Natural killer cell (primary cell): ENCODE measurements at regions of chr6 and their contacts with region 1.

Region 1: GRCh38 chr6:111715321-111715720 is 109.6 kb upstream of the TRAF3IP2 start:
- DNase-seq: peak in 1 of 2 donors; percentile 75
- ATAC-seq: peak in 2 of 3 donors; percentile 19 to 25
- H3K4me3 ChIP-seq: no peak overlapping the region
- H3K4me3 Mint-ChIP-seq: peak overlapping the region; percentile 79
- H3K27ac ChIP-seq: peak overlapping the region; percentile 82
- H3K27ac Mint-ChIP-seq: peak overlapping the region; percentile 98 to 100
- H3K4me1 ChIP-seq: peaks cover 44% of the 10 kb centered on the region
- H3K4me1 Mint-ChIP-seq: peaks cover 74 to 76% of the 10 kb centered on the region in 2 donors
- H3K27me3 ChIP-seq: no peaks in the 10 kb centered on the region
- H3K27me3 Mint-ChIP-seq: no peaks in the 10 kb centered on the region
- CTCF ChIP-seq: no peak

Region 2: GRCh38 chr6:111731456-111732195 is 16.3 kb after region 1 on chr6:
- intact Hi-C with region 1: loop called (anchors 1 kb)
- DNase-seq: peak; percentile 48 to 55
- ATAC-seq: peak; percentile 63 to 82 (median 74)
- H3K4me3 ChIP-seq: no peak overlapping the region
- H3K4me3 Mint-ChIP-seq: peak overlapping the region; percentile 62
- H3K27ac ChIP-seq: peak overlapping the region; percentile 84
- H3K27ac Mint-ChIP-seq: peak overlapping the region; percentile 90 to 100
- H3K4me1 ChIP-seq: peaks cover 77% of the 10 kb centered on the region
- H3K4me1 Mint-ChIP-seq: peaks cover 93 to 96% of the 10 kb centered on the region in 2 donors
- H3K27me3 ChIP-seq: no peaks in the 10 kb centered on the region
- H3K27me3 Mint-ChIP-seq: no peaks in the 10 kb centered on the region
- CTCF ChIP-seq: no peak

Region 3: GRCh38 chr6:111750753-111751684 is 35.7 kb after region 1 on chr6:
- intact Hi-C with region 1: loop called (anchors 2 kb)
- DNase-seq: peak; percentile 53 to 92
- ATAC-seq: peak; percentile 70 to 83 (median 80)
- H3K4me3 ChIP-seq: no peak overlapping the region
- H3K4me3 Mint-ChIP-seq: peak overlapping the region; percentile 86
- H3K27ac ChIP-seq: peak overlapping the region; percentile 99
- H3K27ac Mint-ChIP-seq: peak overlapping the region; percentile 92 to 100
- H3K4me1 ChIP-seq: peaks cover 57% of the 10 kb centered on the region
- H3K4me1 Mint-ChIP-seq: peaks cover 95 to 96% of the 10 kb centered on the region in 2 donors
- H3K27me3 ChIP-seq: no peaks in the 10 kb centered on the region
- H3K27me3 Mint-ChIP-seq: no peaks in the 10 kb centered on the region
- CTCF ChIP-seq: no peak

Region 4: GRCh38 chr6:111777357-111777756 is 62.0 kb after region 1 on chr6:
- intact Hi-C with region 1: loop called (anchors 2 kb)
- DNase-seq: peak in 1 of 2 donors; percentile 78
- ATAC-seq: peak; percentile 61 to 77 (median 70)
- H3K4me3 ChIP-seq: no peak overlapping the region
- H3K4me3 Mint-ChIP-seq: peak overlapping the region; percentile 68
- H3K27ac ChIP-seq: peak overlapping the region; percentile 67
- H3K27ac Mint-ChIP-seq: peak overlapping the region; percentile 99 to 100
- H3K4me1 ChIP-seq: peaks cover 68% of the 10 kb centered on the region
- H3K4me1 Mint-ChIP-seq: peaks cover 88 to 90% of the 10 kb centered on the region in 2 donors
- H3K27me3 ChIP-seq: no peaks in the 10 kb centered on the region
- H3K27me3 Mint-ChIP-seq: no peaks in the 10 kb centered on the region
- CTCF ChIP-seq: peak; percentile 30